ENCODE measurements at regions of chr21 and their contacts with region 1.

Region 1: DNA sequence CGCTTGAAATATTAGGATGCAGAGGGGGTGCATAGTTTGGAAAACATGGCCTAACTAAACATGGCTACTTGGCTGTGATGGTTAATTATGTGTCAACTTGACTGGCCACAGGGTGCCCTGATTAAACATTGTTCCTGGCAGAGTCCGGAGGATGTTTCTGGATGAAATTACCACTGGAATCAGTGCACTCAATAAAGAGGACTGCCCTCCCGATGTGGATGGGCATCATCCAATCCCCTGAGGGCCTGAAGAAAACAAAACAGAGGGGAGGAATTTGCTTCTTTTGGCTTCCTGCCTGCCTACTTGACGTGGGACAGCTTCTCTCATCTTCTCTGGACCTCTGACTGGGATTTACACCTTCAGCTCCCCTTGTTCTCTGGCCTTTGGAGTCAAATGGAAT is 79.1 kb upstream of the KCNE2 start:
- DNase-seq: no peak
- H3K4me3 ChIP-seq: no peak overlapping the region
- H3K27ac ChIP-seq: no peak overlapping the region
- H3K4me1 ChIP-seq: peaks cover 17% of the 10 kb centered on the region
- H3K27me3 ChIP-seq: no peaks in the 10 kb centered on the region
- CTCF ChIP-seq: no peak

Region 2: DNA sequence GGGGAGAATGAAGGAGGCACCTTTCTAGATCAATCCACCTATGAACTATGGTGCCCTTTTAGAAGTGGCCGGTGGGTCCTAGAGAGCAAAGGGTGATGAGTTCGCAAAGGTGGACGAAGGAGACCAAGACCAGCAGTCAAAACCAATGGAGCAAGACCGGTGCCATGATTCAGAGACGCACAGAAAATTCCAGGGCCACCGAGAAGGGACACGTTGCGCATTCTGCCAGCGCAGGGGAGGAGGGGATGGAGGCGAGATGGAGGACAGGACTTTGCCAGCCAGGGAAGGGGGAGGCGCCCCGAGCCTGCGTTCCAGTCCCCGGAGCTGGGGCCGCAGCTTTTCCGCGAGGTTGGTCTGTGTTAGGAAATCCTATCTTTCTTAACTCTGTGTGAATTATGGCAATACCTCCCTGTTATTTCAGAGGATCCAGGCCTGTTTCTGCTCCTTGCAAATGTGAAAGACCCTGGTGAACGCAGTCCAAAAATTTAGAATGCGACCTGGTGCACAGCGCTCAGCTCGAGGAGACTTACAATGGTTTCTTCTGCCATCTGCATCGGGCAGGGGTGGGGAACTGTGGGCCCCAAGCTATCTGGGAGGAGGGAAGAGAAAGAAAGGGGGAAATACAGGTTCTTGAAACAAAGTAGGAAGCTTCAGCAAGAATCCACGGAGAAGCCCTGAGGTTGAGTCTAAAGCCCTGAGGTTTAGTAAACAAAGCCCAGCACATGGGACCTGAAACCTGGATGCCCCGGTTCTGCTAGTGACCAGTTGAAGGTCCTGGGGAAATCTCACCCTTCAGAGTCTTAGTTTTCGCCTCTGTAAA is 81.9 kb before region 1 on chr21:
- CTCF ChIA-PET with region 1: interaction called, 32 read pairs
- dilution Hi-C with region 1: no loop called
- in situ Hi-C with region 1: no loop called
- intact Hi-C with region 1: no loop called
- DNase-seq: no peak
- H3K4me3 ChIP-seq: no peak overlapping the region
- H3K27ac ChIP-seq: no peak overlapping the region
- H3K4me1 ChIP-seq: peaks cover 4% of the 10 kb centered on the region
- H3K27me3 ChIP-seq: no peaks in the 10 kb centered on the region
- CTCF ChIP-seq: no peak